ENCODE measurements at regions of chr7 and their contacts with region 1.

Region 1: DNA sequence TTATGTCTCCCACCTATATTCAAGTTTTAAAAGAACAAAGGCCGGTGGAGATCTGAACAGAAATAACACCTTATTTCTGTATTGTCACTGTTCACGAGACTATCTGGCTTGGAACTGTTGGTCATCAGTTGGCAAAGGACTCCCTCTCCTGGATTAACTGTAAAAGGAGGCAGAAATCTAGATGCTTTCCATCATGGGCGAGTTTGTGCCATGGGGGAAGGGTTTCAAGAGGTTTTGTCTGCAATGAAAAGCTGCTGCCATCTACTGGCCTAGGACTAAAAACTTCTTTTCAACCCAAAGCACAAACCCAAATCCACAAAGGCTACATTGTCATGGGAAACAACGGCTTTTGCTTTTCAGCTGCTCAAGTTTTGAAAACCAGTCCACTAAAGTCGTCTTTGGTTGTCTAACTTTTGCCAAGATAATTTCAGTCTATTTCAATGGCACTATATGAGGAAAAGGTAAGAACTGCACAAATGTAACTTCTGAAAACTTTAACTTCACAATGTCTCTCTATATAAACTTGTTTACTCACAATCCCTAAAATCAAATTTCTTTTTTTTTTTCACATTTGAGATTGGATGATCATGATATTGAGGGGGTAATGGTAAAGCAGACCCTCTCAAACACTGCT is 196.8 kb downstream of the SKAP2 start:
- DNase-seq: peak; percentile 73
- H3K4me3 ChIP-seq: no peak overlapping the region
- H3K27ac ChIP-seq: no peak overlapping the region
- H3K4me1 ChIP-seq: peaks cover 0 to 18% (median 0%) of the 10 kb centered on the region in 4 donors
- H3K27me3 ChIP-seq: no peaks in the 10 kb centered on the region
- CTCF ChIP-seq: peak; percentile 64 to 88 (median 71)
- EP300 ChIP-seq: no peak
- POLR2A ChIP-seq: no peak

Region 2: GRCh38 chr7:25594122-25594521 is 1073.5 kb before region 1 on chr7:
- in situ Hi-C with region 1: no loop called
- intact Hi-C with region 1: loop called (anchors 5 kb)
- DNase-seq: no peak
- H3K4me3 ChIP-seq: no peak overlapping the region
- H3K27ac ChIP-seq: no peak overlapping the region
- H3K4me1 ChIP-seq: peaks cover 0 to 9% (median 3%) of the 10 kb centered on the region in 4 donors
- H3K27me3 ChIP-seq: no peaks in the 10 kb centered on the region
- CTCF ChIP-seq: no peak
- EP300 ChIP-seq: no peak
- POLR2A ChIP-seq: no peak

Region 3: GRCh38 chr7:25886387-25887240 is 781.0 kb before region 1 on chr7:
- in situ Hi-C with region 1: loop called (anchors 10 to 25 kb)
- intact Hi-C with region 1: loop called (anchors 5 kb)
- DNase-seq: no peak
- H3K4me3 ChIP-seq: no peak overlapping the region
- H3K27ac ChIP-seq: no peak overlapping the region
- H3K4me1 ChIP-seq: no peaks in the 10 kb centered on the region
- H3K27me3 ChIP-seq: peaks cover 51% of the 10 kb centered on the region
- CTCF ChIP-seq: no peak
- EP300 ChIP-seq: no peak
- POLR2A ChIP-seq: no peak

Region 4: DNA sequence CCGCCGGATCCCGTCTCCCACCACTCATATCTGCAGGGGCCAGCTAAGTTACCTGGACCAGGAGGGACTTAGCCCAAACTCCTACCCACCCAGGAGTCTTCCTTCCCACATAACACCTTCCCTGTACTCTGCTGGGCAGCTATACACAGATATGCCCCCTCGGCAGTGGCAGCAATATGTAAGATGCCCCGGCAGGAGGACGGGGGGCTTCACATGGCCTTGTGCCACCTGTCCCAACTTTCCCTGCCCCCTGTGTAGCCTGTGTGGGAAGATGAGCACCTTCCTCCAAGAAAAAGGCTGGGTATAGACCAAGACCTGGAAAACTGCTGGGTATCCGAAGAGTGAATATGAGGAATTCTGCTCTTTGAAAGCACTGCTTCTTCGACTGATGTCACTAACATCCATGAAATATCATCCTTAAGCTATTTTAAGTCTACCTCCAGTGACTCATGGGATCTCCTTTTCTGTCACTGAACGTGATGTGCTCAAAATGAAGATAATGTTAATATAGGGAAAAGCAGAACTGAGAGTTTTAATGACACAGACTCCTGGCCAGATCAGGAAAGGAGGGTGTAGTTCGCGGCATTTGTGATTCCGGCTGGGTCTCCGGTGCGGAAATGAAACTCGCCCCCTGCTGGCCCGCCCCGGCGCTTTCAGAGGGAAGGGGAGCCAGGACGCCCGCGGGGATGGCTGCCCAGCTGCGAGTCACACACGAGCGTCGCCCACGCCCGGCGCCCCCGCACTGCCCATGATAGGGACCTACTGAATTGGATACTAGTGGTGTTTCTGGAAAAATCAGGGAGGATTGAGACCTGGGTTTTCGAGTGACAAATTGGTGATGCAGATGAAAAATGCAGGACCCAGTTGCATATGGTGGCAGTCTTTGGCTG is 772.5 kb before region 1 on chr7:
- in situ Hi-C with region 1: loop called (anchors 10 to 25 kb)
- intact Hi-C with region 1: no loop called
- DNase-seq: peak; percentile 85
- H3K4me3 ChIP-seq: peak overlapping the region in 1 of 4 donors; percentile 34
- H3K27ac ChIP-seq: peak overlapping the region in 2 of 4 donors; percentile 45 to 61
- H3K4me1 ChIP-seq: peaks cover 0 to 11% (median 3%) of the 10 kb centered on the region in 4 donors
- H3K27me3 ChIP-seq: peaks cover 6% of the 10 kb centered on the region
- CTCF ChIP-seq: peak; percentile 71 to 78 (median 75)
- EP300 ChIP-seq: no peak
- POLR2A ChIP-seq: no peak

Region 5: GRCh38 chr7:26078437-26079336 is 588.9 kb before region 1 on chr7:
- in situ Hi-C with region 1: loop called (anchors 25 kb)
- intact Hi-C with region 1: no loop called
- DNase-seq: peak; percentile 80
- H3K4me3 ChIP-seq: no peak overlapping the region
- H3K27ac ChIP-seq: no peak overlapping the region
- H3K4me1 ChIP-seq: peaks cover 0 to 14% (median 4%) of the 10 kb centered on the region in 4 donors
- H3K27me3 ChIP-seq: peaks cover 63% of the 10 kb centered on the region
- CTCF ChIP-seq: peak in 2 of 5 experiments; percentile 30 to 38
- EP300 ChIP-seq: no peak
- POLR2A ChIP-seq: no peak

Region 6: GRCh38 chr7:26376175-26376917 is 291.3 kb before region 1 on chr7:
- in situ Hi-C with region 1: loop called (anchors 5 to 10 kb)
- intact Hi-C with region 1: loop called (anchors 10 kb)
- DNase-seq: peak; percentile 39
- H3K4me3 ChIP-seq: peak overlapping the region; percentile 35 to 69 (median 50)
- H3K27ac ChIP-seq: peak overlapping the region; percentile 51 to 67 (median 60)
- H3K4me1 ChIP-seq: peaks cover 0 to 16% (median 9%) of the 10 kb centered on the region in 4 donors
- H3K27me3 ChIP-seq: peaks cover 80% of the 10 kb centered on the region
- CTCF ChIP-seq: no peak
- EP300 ChIP-seq: no peak
- POLR2A ChIP-seq: no peak

Region 7: DNA sequence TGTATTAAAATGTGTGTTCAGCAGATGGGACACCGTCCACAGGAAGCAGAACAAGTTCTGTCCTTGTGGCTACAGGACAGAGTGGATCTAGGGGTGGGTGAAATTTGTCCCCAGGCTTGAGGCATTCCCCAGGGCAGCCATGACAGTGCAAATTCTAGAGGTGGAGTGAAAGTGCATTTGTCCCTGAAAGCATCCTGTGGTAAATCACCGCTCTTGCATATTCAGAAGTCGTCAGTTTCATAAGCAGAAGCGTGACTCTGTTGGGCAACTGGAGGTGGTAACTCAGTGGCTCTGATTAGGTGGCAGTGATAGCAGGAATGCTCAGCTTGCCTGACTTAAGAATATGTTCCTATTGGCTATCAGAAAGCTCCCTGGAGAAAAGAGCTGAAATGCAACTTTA is 279.4 kb before region 1 on chr7:
- in situ Hi-C with region 1: no loop called
- intact Hi-C with region 1: loop called (anchors 10 kb)
- DNase-seq: no peak
- H3K4me3 ChIP-seq: no peak overlapping the region
- H3K27ac ChIP-seq: no peak overlapping the region
- H3K4me1 ChIP-seq: no peaks in the 10 kb centered on the region
- H3K27me3 ChIP-seq: no peaks in the 10 kb centered on the region
- CTCF ChIP-seq: no peak
- EP300 ChIP-seq: no peak
- POLR2A ChIP-seq: no peak

Region 8: DNA sequence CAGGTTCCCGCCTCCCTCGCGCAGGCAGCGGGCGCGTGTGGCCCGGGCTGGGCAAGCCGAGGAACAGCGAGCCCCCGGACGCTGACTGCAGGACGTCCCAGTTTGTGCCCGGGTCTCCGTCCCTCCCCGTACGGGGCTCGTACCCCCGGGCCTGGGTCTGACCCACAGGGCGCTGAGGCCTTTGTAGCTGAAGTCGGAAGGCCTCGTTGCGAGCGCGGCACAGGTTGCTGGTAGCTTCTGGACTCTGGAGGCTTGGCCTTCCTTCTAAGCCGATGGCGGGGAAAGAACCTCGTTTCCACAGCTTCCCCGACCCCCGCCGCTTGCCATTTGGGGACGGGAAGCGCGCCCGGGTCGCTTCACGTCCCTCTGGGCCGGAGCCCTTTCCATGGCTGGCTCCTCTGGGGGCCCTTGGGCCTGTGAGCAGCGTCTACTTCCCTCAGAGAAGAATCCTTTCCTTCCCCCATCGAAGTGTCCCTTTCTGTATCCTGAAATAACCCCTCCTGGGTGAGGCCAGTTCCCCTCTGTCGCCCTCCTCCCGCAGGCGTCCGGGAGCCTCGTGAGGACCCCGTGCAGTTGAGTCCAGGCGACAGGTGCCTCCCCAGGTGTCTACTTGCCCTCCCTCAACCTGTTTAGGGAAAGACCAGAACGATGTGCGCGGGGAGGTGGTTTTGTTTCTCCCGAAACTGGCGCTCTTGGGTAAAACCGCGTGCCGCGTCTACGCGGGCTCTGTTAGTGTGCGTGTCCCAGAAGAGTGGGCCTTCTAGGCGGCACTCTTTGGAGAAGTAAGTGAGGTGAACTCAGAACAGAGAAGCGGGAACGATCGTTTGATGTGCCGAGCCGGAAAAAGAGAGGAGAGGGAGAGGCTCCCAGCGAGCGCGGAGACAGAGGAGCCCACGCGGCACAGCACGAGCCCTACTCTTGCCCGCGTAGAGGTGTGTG is 584.3 kb after region 1 on chr7:
- in situ Hi-C with region 1: no loop called
- intact Hi-C with region 1: no loop called
- DNase-seq: no peak
- H3K4me3 ChIP-seq: peak overlapping the region in 2 of 4 donors; percentile 4 to 5
- H3K27ac ChIP-seq: no peak overlapping the region
- H3K4me1 ChIP-seq: peaks cover 0 to 13% (median 12%) of the 10 kb centered on the region in 4 donors
- H3K27me3 ChIP-seq: peaks cover 79% of the 10 kb centered on the region
- CTCF ChIP-seq: no peak
- EP300 ChIP-seq: no peak
- POLR2A ChIP-seq: no peak